IMR-90 (cell line): ENCODE measurements at regions of chr5 and their contacts with region 1.

Region 1: GRCh38 chr5:32916648-32917047 is 205.5 kb downstream of the NPR3 start:
- DNase-seq: peak; percentile 52
- ATAC-seq: peak; percentile 79
- H3K4me3 ChIP-seq: no peak overlapping the region
- H3K27ac ChIP-seq: no peak overlapping the region
- H3K4me1 ChIP-seq: peaks cover 2% of the 10 kb centered on the region; the same call in 1 of the 2 replicates
- H3K27me3 ChIP-seq: no peaks in the 10 kb centered on the region
- CTCF ChIP-seq: peak; percentile 68
- POLR2A ChIP-seq: no peak
- RAD21 ChIP-seq: peak; percentile 82

Region 2: DNA sequence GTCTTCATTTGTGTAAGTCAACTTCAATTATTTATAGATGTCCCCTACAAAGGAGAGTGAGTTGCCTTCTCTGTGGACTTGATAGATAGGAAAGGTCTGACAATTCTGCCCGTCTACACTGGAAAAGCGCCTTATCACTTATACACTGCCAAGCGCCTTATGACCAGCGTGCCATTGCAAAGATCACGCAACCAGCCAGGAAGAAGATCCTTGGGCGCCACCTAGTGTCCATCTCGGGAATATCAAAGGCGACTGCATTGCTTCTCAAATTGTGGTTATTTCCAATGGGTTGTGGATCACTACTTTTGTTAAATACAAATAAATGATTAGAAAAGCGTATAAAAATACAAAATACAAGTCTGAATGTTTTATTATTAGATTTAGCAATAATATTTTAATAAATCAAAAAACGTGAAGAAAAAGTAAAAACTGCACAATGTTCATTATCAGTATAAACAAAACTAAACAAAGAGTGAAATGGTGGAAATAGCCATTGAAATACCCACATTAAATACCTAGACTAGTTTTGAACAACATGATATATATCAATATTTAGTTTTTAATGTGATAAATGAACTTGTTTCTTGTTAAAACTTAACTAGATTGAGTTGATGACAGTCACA is 303.5 kb before region 1 on chr5:
- CTCF ChIA-PET with region 1: no interaction called
- POLR2A ChIA-PET with region 1: no interaction called
- dilution Hi-C with region 1: no loop called
- in situ Hi-C with region 1: no loop called
- intact Hi-C with region 1: loop called (anchors 10 kb)
- DNase-seq: peak; percentile 75
- ATAC-seq: peak; percentile 87
- H3K4me3 ChIP-seq: no peak overlapping the region
- H3K27ac ChIP-seq: no peak overlapping the region
- H3K4me1 ChIP-seq: peaks cover 3% of the 10 kb centered on the region
- H3K27me3 ChIP-seq: no peaks in the 10 kb centered on the region
- CTCF ChIP-seq: peak; percentile 91
- POLR2A ChIP-seq: 0 out of 2 replicates have a peak, but pooled peaks have one; percentile 29
- RAD21 ChIP-seq: peak; percentile 93

Region 3: DNA sequence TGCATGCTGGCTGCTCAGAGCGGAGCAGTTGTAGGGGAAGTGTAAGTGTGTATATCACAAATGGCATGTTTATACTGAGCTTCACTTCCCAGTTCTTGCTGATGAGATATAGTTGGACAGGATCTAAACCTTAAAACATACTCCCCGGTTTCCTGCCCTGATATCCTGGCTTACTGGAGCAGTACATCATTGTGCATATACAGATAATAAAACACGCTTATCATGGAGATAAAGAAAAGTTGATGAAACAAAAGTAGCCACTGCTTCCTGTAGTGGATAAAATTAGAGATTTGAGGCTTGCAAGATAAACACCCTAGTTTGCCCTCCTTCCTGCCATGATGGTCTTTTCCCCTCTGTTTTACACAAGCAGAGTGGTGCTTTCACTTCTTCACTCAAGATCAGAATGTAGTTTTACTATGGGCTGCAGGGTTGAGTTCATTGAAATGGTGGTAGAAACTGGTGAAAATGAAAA is 190.5 kb before region 1 on chr5:
- CTCF ChIA-PET with region 1: no interaction called
- POLR2A ChIA-PET with region 1: no interaction called
- dilution Hi-C with region 1: no loop called
- in situ Hi-C with region 1: no loop called
- intact Hi-C with region 1: no loop called
- DNase-seq: peak; percentile 19
- ATAC-seq: peak; percentile 73
- H3K4me3 ChIP-seq: no peak overlapping the region
- H3K27ac ChIP-seq: no peak overlapping the region
- H3K4me1 ChIP-seq: 0 out of 2 replicates have a peak, but pooled peaks cover 2% of the 10 kb centered on the region
- H3K27me3 ChIP-seq: no peaks in the 10 kb centered on the region
- CTCF ChIP-seq: no peak
- POLR2A ChIP-seq: no peak
- RAD21 ChIP-seq: no peak

Region 4: DNA sequence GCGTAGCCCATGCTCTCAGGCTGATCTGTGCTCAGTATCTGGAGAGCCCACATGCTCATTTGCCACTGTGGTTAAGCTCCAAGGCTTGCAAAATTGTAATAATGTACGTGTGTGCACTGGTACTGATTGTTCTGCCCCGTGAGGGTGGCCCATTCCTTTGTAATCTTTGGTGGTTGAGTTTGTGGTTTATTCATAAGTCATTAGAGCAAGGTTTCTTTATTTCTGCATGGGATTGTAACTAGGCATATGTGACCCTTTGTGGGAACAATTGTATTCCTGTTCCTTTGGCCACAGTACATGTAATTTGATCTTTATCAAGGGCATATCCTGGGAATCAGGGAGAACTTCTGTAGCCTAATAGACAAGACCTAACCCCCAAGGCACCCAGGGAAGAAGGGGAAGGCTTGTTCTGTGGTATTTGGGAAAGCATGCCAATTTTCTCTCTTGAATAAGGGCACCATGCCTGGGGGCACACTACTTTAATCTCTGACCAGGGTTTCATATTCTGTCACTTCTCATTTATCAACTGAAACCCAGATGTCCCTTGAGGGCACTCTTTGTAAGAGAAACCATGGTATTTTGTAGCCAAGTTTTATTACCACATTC is 130.9 kb before region 1 on chr5:
- CTCF ChIA-PET with region 1: no interaction called
- POLR2A ChIA-PET with region 1: no interaction called
- dilution Hi-C with region 1: no loop called
- in situ Hi-C with region 1: no loop called
- intact Hi-C with region 1: loop called (anchors 10 kb)
- DNase-seq: no peak
- ATAC-seq: no peak
- H3K4me3 ChIP-seq: no peak overlapping the region
- H3K27ac ChIP-seq: no peak overlapping the region
- H3K4me1 ChIP-seq: peaks cover 8% of the 10 kb centered on the region
- H3K27me3 ChIP-seq: no peaks in the 10 kb centered on the region
- CTCF ChIP-seq: no peak
- POLR2A ChIP-seq: no peak
- RAD21 ChIP-seq: no peak

Region 5: DNA sequence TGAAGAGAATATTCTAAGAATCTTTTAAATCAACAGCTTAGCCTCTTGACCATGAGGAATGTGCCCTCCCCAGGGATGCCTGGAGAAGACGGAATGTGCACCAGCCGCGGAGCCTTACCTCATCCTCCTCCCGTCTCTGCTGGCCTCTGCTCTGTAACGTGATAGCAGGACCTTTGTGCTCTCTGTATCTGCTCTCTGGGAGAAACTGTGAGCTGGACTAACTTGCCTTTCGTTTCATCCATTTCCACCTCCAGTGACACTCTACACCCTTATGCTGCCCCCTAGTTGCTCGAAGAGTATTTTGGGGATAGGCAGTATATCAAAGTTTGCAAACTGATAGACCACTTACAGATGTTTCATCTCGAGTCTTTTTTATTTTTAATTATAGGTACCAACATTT is 64.1 kb before region 1 on chr5:
- CTCF ChIA-PET with region 1: no interaction called
- POLR2A ChIA-PET with region 1: no interaction called
- dilution Hi-C with region 1: no loop called
- in situ Hi-C with region 1: no loop called
- intact Hi-C with region 1: no loop called
- DNase-seq: peak; percentile 89
- ATAC-seq: peak; percentile 97
- H3K4me3 ChIP-seq: no peak overlapping the region
- H3K27ac ChIP-seq: no peak overlapping the region
- H3K4me1 ChIP-seq: peaks cover 8% of the 10 kb centered on the region; the same call in 1 of the 2 replicates
- H3K27me3 ChIP-seq: no peaks in the 10 kb centered on the region
- CTCF ChIP-seq: peak; percentile 55
- POLR2A ChIP-seq: no peak
- RAD21 ChIP-seq: peak; percentile 60

Region 6: GRCh38 chr5:32961059-32961415 is 44.4 kb after region 1 on chr5:
- CTCF ChIA-PET with region 1: no interaction called
- POLR2A ChIA-PET with region 1: no interaction called
- dilution Hi-C with region 1: no loop called
- in situ Hi-C with region 1: no loop called
- intact Hi-C with region 1: no loop called
- DNase-seq: peak; percentile 31
- ATAC-seq: no peak
- H3K4me3 ChIP-seq: no peak overlapping the region
- H3K27ac ChIP-seq: no peak overlapping the region
- H3K4me1 ChIP-seq: peaks cover 1% of the 10 kb centered on the region; the same call in 1 of the 2 replicates
- H3K27me3 ChIP-seq: no peaks in the 10 kb centered on the region
- CTCF ChIP-seq: no peak
- POLR2A ChIP-seq: no peak
- RAD21 ChIP-seq: no peak

Region 7: GRCh38 chr5:33299621-33300208 is 383.1 kb after region 1 on chr5:
- CTCF ChIA-PET with region 1: no interaction called
- POLR2A ChIA-PET with region 1: no interaction called
- dilution Hi-C with region 1: no loop called
- in situ Hi-C with region 1: no loop called
- intact Hi-C with region 1: loop called (anchors 10 kb)
- DNase-seq: peak; percentile 71
- ATAC-seq: peak; percentile 86
- H3K4me3 ChIP-seq: no peak overlapping the region
- H3K27ac ChIP-seq: peak overlapping the region; percentile 2; the same call in 1 of the 2 replicates
- H3K4me1 ChIP-seq: peaks cover 3% of the 10 kb centered on the region; the same call in 1 of the 2 replicates
- H3K27me3 ChIP-seq: no peaks in the 10 kb centered on the region
- CTCF ChIP-seq: peak; percentile 56
- POLR2A ChIP-seq: no peak
- RAD21 ChIP-seq: peak; percentile 67